Adrenal gland (tissue), 19 donors: ENCODE measurements at regions of chr7 and their contacts with region 1.

Region 1: GRCh38 chr7:100469227-100470044 is 5.4 kb upstream of the SPACDR start:
- DNase-seq: peak; percentile 84 to 95 (median 92)
- H3K4me3 ChIP-seq: no peak overlapping the region
- H3K27ac ChIP-seq: peak overlapping the region in 2 of 5 donors; percentile 33 to 41
- H3K4me1 ChIP-seq: peaks cover 17 to 36% of the 10 kb centered on the region in 2 donors
- H3K27me3 ChIP-seq: no peaks in the 10 kb centered on the region
- CTCF ChIP-seq: peak; percentile 92 to 99 (median 96)
- POLR2A ChIP-seq: no peak

Region 2: GRCh38 chr7:100418930-100419659 is 50.3 kb before region 1 on chr7:
- intact Hi-C with region 1: no loop called
- DNase-seq: no peak
- H3K4me3 ChIP-seq: no peak overlapping the region
- H3K27ac ChIP-seq: no peak overlapping the region
- H3K4me1 ChIP-seq: no peaks in the 10 kb centered on the region
- H3K27me3 ChIP-seq: no peaks in the 10 kb centered on the region
- CTCF ChIP-seq: no peak
- POLR2A ChIP-seq: no peak

Region 3: DNA sequence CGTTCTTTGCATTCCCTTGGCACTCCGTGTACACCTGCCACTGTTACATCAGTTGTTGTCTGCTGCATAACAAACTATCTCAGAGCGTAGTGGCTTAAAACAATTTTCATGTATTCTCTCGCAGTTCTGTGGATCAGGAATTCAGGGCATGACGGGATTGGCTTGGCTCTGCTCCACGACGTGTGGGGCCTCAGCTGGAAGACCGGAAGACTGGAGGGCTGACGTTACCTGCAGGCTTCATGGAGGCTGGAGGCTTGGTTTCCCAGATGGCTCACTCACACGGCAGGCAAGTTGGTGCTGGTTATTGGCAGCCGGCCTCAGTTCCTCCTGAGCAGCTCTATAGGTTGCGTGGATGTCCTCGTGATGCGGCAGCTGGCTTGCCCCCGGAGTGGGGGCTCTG is 39.8 kb after region 1 on chr7:
- intact Hi-C with region 1: no loop called
- DNase-seq: peak in 4 of 7 donors; percentile 25 to 62 (median 34)
- H3K4me3 ChIP-seq: no peak overlapping the region
- H3K27ac ChIP-seq: no peak overlapping the region
- H3K4me1 ChIP-seq: no peaks in the 10 kb centered on the region
- H3K27me3 ChIP-seq: no peaks in the 10 kb centered on the region
- CTCF ChIP-seq: no peak
- POLR2A ChIP-seq: no peak

Region 4: GRCh38 chr7:100680167-100680575 is 210.7 kb after region 1 on chr7:
- intact Hi-C with region 1: loop called (anchors 5 kb)
- DNase-seq: peak; percentile 54 to 87 (median 79)
- H3K4me3 ChIP-seq: no peak overlapping the region
- H3K27ac ChIP-seq: peak overlapping the region; percentile 15 to 74 (median 62)
- H3K4me1 ChIP-seq: peaks cover 10 to 35% of the 10 kb centered on the region in 2 donors
- H3K27me3 ChIP-seq: no peaks in the 10 kb centered on the region
- CTCF ChIP-seq: no peak
- POLR2A ChIP-seq: peak in 1 of 2 donors; percentile 39

Region 5: DNA sequence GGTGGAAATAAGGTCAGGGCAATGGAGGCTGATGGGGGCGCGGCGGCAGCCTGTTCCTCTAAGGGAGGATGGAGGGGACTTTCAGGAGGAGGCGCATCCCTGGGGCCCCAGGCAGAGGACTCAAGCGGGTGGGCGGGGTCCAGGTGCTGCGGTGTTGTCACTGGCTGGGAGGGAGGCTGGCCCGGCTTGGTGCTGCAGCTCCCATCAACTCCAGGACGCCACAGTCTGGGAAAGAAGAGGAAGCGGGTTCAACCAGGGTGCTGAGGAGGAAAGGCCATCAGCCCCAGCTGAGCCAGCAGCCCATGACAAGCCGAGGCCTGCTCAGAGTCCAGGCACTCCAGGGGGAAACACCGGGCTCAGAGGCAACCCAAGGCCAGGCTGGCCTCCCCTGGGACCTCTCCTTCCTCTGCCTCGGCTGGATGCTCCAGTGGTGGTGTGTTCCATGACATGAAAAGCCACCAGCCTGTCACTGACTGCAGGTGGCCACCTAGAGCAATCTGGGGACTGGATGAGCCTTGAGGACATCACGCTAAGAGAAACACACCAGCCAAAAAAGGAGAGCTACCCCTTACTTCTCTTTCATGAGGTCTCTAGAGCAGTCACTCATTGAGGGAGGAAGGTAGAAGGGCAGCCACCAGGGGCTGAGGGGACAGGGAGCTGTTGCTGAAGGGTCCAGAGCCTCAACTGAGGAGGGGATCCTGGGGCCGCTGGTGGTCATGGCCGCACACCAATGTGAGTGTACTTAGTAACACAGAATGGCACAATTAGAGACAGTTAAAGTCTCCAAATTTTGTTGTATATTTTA is 220.1 kb after region 1 on chr7:
- intact Hi-C with region 1: loop called (anchors 5 kb)
- DNase-seq: peak in 2 of 7 donors; percentile 23
- H3K4me3 ChIP-seq: no peak overlapping the region
- H3K27ac ChIP-seq: peak overlapping the region in 2 of 5 donors; percentile 44 to 69
- H3K4me1 ChIP-seq: peaks cover 19 to 64% of the 10 kb centered on the region in 2 donors
- H3K27me3 ChIP-seq: no peaks in the 10 kb centered on the region
- CTCF ChIP-seq: no peak
- POLR2A ChIP-seq: no peak